ENCODE measurements at regions of chr20 and their contacts with region 1.

Region 1: DNA sequence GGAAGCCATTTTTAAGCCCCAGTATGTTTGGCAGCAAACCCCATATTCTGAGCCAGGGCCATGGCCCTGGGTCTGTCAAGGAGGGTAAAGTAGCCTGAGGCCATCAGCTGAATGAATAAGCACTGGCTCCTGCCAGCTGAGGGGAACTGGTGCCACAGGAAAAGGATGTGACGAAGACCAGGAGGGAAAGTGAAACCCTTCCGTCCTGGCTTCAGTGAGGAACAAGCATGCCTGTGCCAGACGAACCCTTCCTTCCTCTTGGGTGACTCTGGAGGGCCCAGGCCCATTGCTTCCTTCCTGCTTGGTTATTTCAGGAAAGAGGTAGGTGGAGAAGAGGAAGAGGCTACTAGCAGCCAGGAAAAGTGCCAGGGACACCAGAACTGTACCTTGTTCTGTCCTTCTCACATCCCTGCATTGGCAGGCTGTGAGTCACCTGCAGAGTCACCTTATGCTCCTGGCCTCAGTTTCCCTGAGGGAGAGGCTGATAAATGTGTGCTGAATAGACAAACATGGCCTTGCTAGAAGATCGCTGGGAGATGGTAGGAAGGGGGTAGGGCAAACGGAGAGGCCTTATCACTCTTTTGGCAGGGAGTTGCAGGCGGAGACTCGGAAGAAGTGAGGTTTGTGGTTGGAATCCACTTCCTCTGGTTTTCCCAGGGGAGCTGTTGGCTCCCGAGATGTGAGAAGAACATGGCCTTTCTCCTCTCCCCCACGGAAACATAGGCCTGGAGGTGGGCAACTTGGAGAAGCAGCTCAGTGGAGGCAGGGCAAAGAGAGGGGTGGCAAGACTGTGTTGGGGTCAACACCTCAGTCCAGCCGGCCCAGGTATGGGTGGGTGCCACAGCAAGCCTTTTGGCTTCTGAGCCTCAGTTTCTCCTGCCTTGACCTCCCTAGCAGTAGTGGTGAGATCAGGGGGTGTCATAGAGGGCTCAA is 37.4 kb downstream of the COX4I2 start:
- DNase-seq: peak; percentile 83
- H3K4me3 Mint-ChIP-seq: peak overlapping the region; percentile 63
- H3K27ac Mint-ChIP-seq: peak overlapping the region; percentile 60
- H3K4me1 Mint-ChIP-seq: peaks cover 51% of the 10 kb centered on the region
- H3K27me3 Mint-ChIP-seq: no peaks in the 10 kb centered on the region
- CTCF ChIP-seq: no peak

Region 2: DNA sequence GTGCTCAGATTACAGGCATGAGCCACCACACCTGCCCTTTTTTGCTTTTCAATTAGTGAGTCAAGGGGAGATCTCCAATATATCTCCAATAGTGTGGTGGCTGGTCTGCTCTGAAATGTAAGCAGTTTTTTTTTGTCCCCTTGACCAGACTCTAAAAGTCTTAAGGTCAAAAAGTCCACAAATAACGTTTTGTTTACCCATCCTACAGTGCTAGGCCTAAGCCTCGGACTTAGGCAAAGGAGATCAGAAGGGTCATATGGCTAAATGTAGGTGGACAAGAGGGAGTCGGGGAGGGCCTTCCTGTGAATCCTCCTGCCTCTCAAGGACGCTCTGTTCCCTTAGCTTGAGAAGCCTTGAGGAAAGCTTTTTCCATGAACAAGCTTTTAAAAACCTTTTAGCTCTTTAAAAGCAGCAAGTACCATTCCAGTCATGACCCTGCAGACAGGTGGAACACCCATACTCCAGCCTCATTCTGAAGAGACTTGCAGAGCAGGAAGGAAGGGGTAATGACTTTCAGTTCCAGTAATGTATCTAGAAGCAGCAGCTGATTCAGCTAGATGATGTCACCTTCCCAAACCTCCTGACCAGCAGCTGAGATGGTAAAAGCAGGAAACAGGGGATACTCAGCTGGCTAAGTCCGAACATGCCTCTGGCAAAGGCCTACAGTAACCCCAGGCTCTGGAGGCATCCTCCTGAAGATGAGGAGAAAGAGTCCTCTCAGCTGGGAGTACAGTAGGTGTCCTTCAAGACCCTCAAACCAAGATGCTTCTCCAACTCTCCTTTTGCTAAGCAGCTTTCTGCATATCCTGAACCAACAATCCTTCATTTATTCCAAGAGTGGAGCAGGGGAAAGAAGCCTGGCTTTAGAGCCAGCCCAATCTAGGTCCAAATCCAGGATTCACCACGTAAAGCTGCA is 23.9 kb after region 1 on chr20:
- CTCF ChIA-PET with region 1: interaction called, 9 read pairs
- POLR2A ChIA-PET with region 1: interaction called, 17 read pairs
- intact Hi-C with region 1: no loop called
- DNase-seq: peak; percentile 76
- H3K4me3 Mint-ChIP-seq: peak overlapping the region; percentile 52
- H3K27ac Mint-ChIP-seq: peak overlapping the region; percentile 97
- H3K4me1 Mint-ChIP-seq: peaks cover 55% of the 10 kb centered on the region
- H3K27me3 Mint-ChIP-seq: no peaks in the 10 kb centered on the region
- CTCF ChIP-seq: no peak

Region 3: GRCh38 chr20:31704225-31705119 is 29.3 kb after region 1 on chr20:
- CTCF ChIA-PET with region 1: interaction called, 9 read pairs
- POLR2A ChIA-PET with region 1: interaction called, 94 read pairs
- intact Hi-C with region 1: no loop called
- DNase-seq: peak; percentile 84
- H3K4me3 Mint-ChIP-seq: peak overlapping the region; percentile 7
- H3K27ac Mint-ChIP-seq: peak overlapping the region; percentile 92
- H3K4me1 Mint-ChIP-seq: peaks cover 58% of the 10 kb centered on the region
- H3K27me3 Mint-ChIP-seq: no peaks in the 10 kb centered on the region
- CTCF ChIP-seq: no peak

Region 4: GRCh38 chr20:31712564-31713311 is 37.6 kb after region 1 on chr20:
- CTCF ChIA-PET with region 1: no interaction called
- POLR2A ChIA-PET with region 1: interaction called, 94 read pairs
- intact Hi-C with region 1: no loop called
- DNase-seq: peak; percentile 92
- H3K4me3 Mint-ChIP-seq: peak overlapping the region; percentile 70
- H3K27ac Mint-ChIP-seq: peak overlapping the region; percentile 96
- H3K4me1 Mint-ChIP-seq: peaks cover 78% of the 10 kb centered on the region
- H3K27me3 Mint-ChIP-seq: no peaks in the 10 kb centered on the region
- CTCF ChIP-seq: no peak

Region 5: DNA sequence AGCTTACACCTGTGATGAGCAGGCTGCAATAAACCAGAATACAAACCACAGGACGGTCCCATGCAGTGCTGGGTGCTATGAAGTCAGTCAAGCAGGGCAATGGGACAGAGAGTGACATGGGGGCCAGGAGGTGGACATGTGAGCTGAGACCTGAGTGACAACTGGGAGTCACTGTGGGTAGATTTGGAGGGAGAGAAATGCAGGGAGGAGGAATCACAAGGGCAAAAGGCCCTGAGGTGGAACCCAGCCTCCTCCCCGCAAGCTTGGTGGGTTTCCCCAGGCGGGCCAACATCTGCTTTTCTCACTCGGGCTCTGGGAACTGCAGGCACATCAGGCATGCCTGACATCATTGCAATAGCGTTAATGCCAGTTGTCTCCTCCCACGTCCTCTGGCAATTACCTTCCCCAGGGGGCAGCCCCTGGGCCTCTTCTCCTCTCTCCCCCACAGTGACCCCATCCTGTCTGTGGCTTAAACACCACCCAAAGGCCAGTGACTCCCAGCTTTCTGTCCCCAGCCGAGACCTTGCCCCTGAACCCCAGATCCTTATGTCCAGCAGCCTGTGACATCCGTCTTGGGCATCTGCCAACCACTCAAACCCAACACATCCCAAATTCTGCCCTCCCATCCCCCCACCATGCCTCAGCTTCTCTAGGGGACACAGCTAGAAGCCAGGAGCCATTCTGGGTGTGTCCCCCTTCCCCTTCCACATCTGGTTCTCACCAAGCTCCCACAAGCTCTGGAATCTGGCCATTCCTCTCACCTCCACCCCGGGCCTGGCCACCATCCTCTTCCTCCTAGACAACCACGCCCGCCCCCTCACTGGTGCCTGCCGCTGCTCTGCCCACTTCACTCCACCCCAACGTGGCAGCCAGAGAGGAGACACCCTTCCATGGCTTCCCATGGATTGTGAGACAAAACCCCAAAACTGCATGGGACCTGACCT is 248.5 kb after region 1 on chr20:
- CTCF ChIA-PET with region 1: no interaction called
- POLR2A ChIA-PET with region 1: no interaction called
- intact Hi-C with region 1: no loop called
- DNase-seq: no peak
- H3K4me3 Mint-ChIP-seq: no peak overlapping the region
- H3K27ac Mint-ChIP-seq: no peak overlapping the region
- H3K4me1 Mint-ChIP-seq: peaks cover 6% of the 10 kb centered on the region
- H3K27me3 Mint-ChIP-seq: peaks cover 52% of the 10 kb centered on the region
- CTCF ChIP-seq: no peak

Measured in MCF 10A (cell line).